ENCODE measurements at regions of chr4 and their contacts with region 1.

Region 1: DNA sequence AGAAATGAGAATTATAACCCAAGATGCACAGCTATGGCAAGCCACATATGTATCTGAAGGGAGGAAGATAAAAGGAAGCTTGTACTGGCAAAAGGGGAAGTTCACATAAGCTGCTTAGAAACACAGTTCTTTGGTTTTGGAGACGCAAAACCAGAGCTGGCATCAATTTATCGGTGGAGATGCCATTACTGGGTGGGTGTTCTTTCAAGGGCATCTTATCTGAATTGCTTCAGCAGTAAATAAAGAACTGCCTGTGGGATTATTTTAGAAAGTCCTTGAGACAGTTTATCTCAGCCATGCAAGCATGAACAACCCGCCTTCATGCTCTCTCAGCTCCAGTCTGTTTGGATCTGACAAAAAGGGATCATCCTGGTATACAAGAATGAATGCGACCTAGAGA is 60.8 kb downstream of the DDX60 start:
- DNase-seq: peak in 1 of 5 donors; percentile 24
- ATAC-seq: peak; percentile 72 to 93 (median 86)
- H3K4me3 ChIP-seq: no peak overlapping the region
- H3K27ac ChIP-seq: peak overlapping the region in 11 of 12 donors; percentile 11 to 88 (median 68)
- H3K4me1 ChIP-seq: peaks cover 0 to 26% (median 4%) of the 10 kb centered on the region in 12 donors
- H3K27me3 ChIP-seq: no peaks in the 10 kb centered on the region
- CTCF ChIP-seq: no peak
- POLR2A ChIP-seq: no peak

Region 2: GRCh38 chr4:167854881-167855280 is 402.9 kb before region 1 on chr4:
- intact Hi-C with region 1: no loop called
- DNase-seq: no peak
- ATAC-seq: no peak
- H3K4me3 ChIP-seq: no peak overlapping the region
- H3K27ac ChIP-seq: no peak overlapping the region
- H3K4me1 ChIP-seq: no peaks in the 10 kb centered on the region
- H3K27me3 ChIP-seq: no peaks in the 10 kb centered on the region
- CTCF ChIP-seq: no peak
- POLR2A ChIP-seq: no peak

Region 3: DNA sequence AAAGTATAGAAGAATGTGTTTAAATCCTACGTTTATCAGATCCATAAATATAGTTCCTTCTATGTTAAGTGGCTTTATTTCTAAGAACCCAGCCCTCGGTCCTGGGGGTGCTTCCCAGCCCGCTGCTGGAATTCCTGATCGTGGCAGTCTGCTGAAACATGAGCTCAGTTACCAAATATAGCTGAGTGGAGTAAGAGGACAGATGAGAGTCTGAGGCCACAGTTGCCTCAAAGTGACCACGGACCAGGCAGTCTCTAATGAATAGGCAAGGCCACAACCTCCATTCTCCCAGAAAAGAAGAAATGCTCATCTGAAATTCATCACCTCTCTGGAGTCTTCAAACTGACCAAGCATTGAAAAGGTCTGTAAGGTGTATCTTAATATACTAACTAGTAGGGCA is 239.1 kb after region 1 on chr4 and contains the start of gene PALLD:
- intact Hi-C with region 1: loop called in 1 of 10 experiments (anchors 10 kb)
- DNase-seq: peak in 4 of 5 donors; percentile 42 to 71 (median 62)
- ATAC-seq: peak; percentile 92 to 97 (median 94)
- H3K4me3 ChIP-seq: peak within 1 kb of the TSS; percentile 4 to 57 (median 51)
- H3K27ac ChIP-seq: peak within 1 kb of the TSS; percentile 40 to 92 (median 80)
- H3K4me1 ChIP-seq: peaks cover 0 to 4% (median 0%) of the 10 kb centered on the region in 12 donors
- H3K27me3 ChIP-seq: no peaks in the 10 kb centered on the region
- CTCF ChIP-seq: no peak
- POLR2A ChIP-seq: peak; percentile 65 to 77
- total RNA-seq, gene PALLD: 512 to 1,428 (median 1,015) TPM